Uterus (tissue), 4 donors: ENCODE measurements at regions of chr10 and their contacts with region 1.

Region 1: DNA sequence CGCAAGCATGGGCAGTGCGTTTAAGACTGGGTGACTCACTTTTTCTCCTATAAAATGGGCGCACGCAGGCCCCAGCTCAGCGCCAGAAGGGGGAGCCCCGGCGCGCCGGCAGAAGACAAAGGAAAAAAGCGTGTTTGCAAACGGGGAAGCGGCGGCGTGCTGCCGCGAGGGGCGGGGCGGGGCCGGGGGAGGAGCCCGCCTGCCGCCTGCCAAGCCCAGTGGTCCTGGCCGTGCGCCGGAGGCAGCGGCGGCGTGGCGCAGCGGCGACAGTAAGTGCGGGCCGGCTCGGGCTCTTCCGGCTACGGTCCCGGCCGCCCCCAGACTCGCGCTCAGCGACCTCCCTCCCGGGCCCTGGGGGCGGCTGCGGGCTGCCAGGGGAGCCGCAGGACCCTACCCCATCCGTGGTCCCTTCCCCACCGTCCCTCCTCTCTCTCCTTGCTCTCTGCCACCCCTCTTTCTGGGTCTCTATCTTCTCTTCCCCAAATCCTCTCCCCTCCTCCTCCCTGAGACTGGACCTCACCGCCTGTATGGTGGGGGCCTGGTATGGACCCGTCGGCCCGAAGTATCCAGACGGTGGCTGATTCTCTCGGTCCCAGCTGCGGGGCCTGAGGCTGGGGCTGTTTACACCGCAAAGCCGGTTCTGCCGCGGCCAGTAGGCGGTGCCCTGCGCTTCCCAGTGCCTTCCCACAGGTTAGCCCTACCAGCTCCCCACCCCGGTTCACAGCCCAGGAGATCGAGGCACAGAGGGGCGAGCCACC is at the start of gene SLC29A3:
- DNase-seq: peak; percentile 80 to 83
- H3K4me3 ChIP-seq: peak within 1 kb of the TSS; percentile 74 to 80
- H3K27ac ChIP-seq: peak within 1 kb of the TSS; percentile 88 to 92
- H3K4me1 ChIP-seq: no peaks in the 10 kb centered on the region
- H3K27me3 ChIP-seq: no peaks in the 10 kb centered on the region
- CTCF ChIP-seq: peak; percentile 64 to 72 (median 70)
- POLR2A ChIP-seq: peak; percentile 63 to 85
- total RNA-seq, gene SLC29A3: 1.0 to 13.8 (median 5.5) TPM

Region 2: GRCh38 chr10:71015674-71016073 is 303.5 kb before region 1 on chr10:
- intact Hi-C with region 1: no loop called
- DNase-seq: no peak
- H3K4me3 ChIP-seq: no peak overlapping the region
- H3K27ac ChIP-seq: no peak overlapping the region
- H3K4me1 ChIP-seq: no peaks in the 10 kb centered on the region
- H3K27me3 ChIP-seq: no peaks in the 10 kb centered on the region
- CTCF ChIP-seq: no peak
- POLR2A ChIP-seq: no peak

Region 3: GRCh38 chr10:71371750-71372166 is 52.5 kb after region 1 on chr10:
- intact Hi-C with region 1: loop called (anchors 10 kb)
- DNase-seq: no peak
- H3K4me3 ChIP-seq: no peak overlapping the region
- H3K27ac ChIP-seq: no peak overlapping the region
- H3K4me1 ChIP-seq: no peaks in the 10 kb centered on the region
- H3K27me3 ChIP-seq: no peaks in the 10 kb centered on the region
- CTCF ChIP-seq: no peak
- POLR2A ChIP-seq: no peak